Left cardiac atrium (tissue), 4 donors: ENCODE measurements at regions of chr7 and their contacts with region 1.

Region 1: DNA sequence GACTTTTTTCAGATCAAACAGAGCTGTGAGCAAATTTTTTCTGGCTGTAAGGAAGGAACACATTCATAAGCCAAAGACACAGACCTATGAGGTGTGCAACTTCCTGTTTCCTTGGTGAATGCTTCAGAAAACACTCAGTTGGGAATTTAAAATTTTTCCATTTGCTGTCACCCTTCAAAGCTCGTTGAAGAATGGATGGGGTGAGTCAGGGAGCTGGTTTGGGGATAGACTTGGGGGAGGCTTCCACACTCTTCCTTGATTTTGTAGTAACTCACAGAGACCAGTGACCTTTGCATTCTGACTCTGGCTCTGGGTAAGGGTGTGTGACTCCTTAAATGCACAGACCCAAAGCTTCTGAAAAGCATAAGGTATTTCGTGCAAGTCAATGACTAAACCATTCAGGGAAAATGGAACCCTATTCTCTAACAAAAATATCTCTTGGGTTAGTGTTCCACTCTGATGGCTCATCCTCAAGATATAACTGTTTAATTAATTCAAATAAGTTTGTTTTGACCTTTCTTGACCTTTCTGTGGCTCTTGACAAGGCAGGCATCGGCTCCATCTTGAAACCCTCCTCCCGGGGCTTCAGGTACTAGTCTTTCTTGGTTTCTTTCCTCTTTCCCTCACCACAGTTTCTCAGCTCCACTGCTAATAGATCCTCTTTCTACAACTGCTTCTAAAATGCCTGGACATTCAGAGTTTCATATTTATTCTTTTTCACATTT is 227.8 kb upstream of the INHBA start:
- DNase-seq: no peak
- ATAC-seq: peak in 1 of 2 donors; percentile 58

Region 2: GRCh38 chr7:41559426-41559825 is 371.3 kb before region 1 on chr7:
- intact Hi-C with region 1: no loop called
- DNase-seq: no peak
- ATAC-seq: no peak

Region 3: GRCh38 chr7:41731492-41732435 is 198.9 kb before region 1 on chr7:
- intact Hi-C with region 1: no loop called
- DNase-seq: no peak
- ATAC-seq: no peak

Region 4: DNA sequence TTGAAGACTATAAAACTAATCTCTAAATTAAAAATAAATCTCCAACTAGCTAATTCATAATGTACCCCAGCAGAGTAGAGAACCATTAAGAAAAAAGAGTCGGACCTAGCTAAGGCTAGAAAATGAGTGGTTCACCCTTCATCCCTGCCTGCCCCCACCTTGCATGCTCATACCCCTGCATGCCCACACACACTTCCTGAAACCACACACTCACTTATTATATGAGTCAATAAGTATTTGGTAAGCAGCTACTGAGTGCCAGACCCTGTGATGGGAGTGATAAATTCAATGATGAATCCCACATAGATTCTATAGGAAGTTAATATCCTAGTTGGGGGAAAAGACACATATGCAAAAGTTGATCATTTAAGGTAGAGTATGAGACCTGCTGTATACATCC is 74.9 kb before region 1 on chr7:
- intact Hi-C with region 1: no loop called
- DNase-seq: no peak
- ATAC-seq: no peak

Region 5: GRCh38 chr7:42359946-42360345 is 429.2 kb after region 1 on chr7:
- intact Hi-C with region 1: no loop called
- DNase-seq: no peak
- ATAC-seq: no peak

Region 6: GRCh38 chr7:43260980-43261878 is 1330.5 kb after region 1 on chr7:
- intact Hi-C with region 1: loop called in 1 of 2 experiments (anchors 10 kb)
- DNase-seq: peak; percentile 71
- ATAC-seq: peak; percentile 63 to 77